Naive thymus-derived CD4-positive, alpha-beta T cell (primary cell): ENCODE measurements at regions of chr15 and their contacts with region 1.

Region 1: GRCh38 chr15:90387537-90388461 is at the start of gene IQGAP1:
- DNase-seq: peak; percentile 91 to 96 (median 94)
- ATAC-seq: peak; percentile 97
- H3K4me3 ChIP-seq: peak within 1 kb of the TSS; percentile 88
- H3K4me3 Mint-ChIP-seq: peak within 1 kb of the TSS; percentile 80 to 95 (median 92)
- H3K27ac ChIP-seq: peak within 1 kb of the TSS; percentile 93
- H3K27ac Mint-ChIP-seq: peak within 1 kb of the TSS; percentile 68 to 99 (median 94)
- H3K4me1 ChIP-seq: peaks cover 29 to 33% of the 10 kb centered on the region in 2 donors
- H3K4me1 Mint-ChIP-seq: peaks cover 38 to 56% (median 50%) of the 10 kb centered on the region in 7 donors
- H3K27me3 ChIP-seq: no peaks in the 10 kb centered on the region
- H3K27me3 Mint-ChIP-seq: no peaks in the 10 kb centered on the region
- total RNA-seq, gene IQGAP1: 81.8 to 263 (median 93.8) TPM

Region 2: DNA sequence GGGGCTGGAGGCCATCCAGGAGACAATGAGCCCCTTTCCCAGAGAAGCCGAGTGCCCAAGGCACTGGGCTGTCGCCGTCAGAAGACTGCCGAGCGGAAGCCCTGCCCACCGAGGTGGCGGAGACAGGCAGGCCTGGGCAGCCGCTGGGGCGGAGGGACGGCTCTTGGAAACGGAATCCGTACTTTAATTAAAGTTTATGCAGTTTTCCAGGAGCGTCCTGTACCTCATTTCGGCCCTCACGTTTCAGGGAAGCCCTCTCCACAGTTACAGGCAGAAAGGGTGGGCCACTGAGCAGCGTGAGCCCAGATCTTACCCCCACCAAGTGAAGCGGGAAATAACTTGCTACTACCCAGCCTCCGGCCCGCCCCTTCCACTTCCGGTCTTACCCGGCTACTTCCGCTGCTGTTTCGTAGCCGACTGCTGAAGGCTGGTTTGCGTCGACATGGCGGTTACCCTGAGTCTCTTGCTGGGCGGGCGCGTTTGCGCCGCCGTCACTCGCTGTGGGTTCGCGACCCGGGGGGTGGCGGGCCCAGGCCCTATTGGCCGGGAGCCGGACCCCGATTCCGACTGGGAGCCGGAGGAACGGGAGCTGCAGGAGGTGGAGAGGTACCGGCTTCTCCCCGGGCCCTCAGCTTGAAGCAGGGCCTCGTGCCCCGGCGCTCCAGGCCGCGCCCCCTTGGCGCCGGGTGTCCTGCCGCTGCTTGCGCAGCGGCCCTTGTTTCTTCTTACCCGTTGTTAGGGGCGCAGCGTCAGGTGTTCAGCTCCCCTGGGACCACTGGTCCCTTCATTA is 122.3 kb before region 1 on chr15 and contains the start of gene NGRN:
- CTCF ChIA-PET with region 1: no interaction called
- POLR2A ChIA-PET with region 1: no interaction called
- intact Hi-C with region 1: loop called in 1 of 2 experiments (anchors 1 kb)
- DNase-seq: peak; percentile 81 to 96 (median 93)
- ATAC-seq: peak; percentile 94
- H3K4me3 ChIP-seq: peak within 1 kb of the TSS; percentile 84
- H3K4me3 Mint-ChIP-seq: peak within 1 kb of the TSS; percentile 95 to 99 (median 97)
- H3K27ac ChIP-seq: peak within 1 kb of the TSS; percentile 96
- H3K27ac Mint-ChIP-seq: peak within 1 kb of the TSS; percentile 98 to 100 (median 99)
- H3K4me1 ChIP-seq: peaks cover 36 to 40% of the 10 kb centered on the region in 2 donors
- H3K4me1 Mint-ChIP-seq: peaks cover 22 to 60% (median 48%) of the 10 kb centered on the region in 7 donors
- H3K27me3 ChIP-seq: no peaks in the 10 kb centered on the region
- H3K27me3 Mint-ChIP-seq: no peaks in the 10 kb centered on the region
- total RNA-seq, gene NGRN: 34.1 to 51.5 (median 48.4) TPM

Region 3: DNA sequence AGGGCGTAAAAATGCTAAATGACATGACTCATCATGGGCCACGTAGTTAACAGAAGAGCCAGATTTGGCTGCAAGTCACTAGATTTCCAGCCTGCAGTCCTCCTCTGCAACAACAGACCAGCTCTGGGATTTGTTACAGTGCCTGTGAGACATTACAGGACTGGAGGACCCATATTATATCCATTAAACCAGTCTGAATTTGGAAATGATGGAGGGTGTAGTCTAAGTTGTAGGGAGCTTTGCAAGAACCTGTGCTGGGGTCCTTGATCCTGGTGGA is 24.9 kb before region 1 on chr15:
- CTCF ChIA-PET with region 1: interaction called, 7 read pairs
- POLR2A ChIA-PET with region 1: interaction called, 4 read pairs
- intact Hi-C with region 1: loop called in 1 of 2 experiments (anchors 1 kb)
- DNase-seq: no peak
- ATAC-seq: no peak
- H3K4me3 ChIP-seq: no peak overlapping the region
- H3K4me3 Mint-ChIP-seq: peak overlapping the region in 1 of 10 donors; percentile 44
- H3K27ac ChIP-seq: no peak overlapping the region
- H3K27ac Mint-ChIP-seq: no peak overlapping the region
- H3K4me1 ChIP-seq: peaks cover 6 to 13% of the 10 kb centered on the region in 2 donors
- H3K4me1 Mint-ChIP-seq: peaks cover 11 to 35% (median 34%) of the 10 kb centered on the region in 7 donors
- H3K27me3 ChIP-seq: no peaks in the 10 kb centered on the region
- H3K27me3 Mint-ChIP-seq: no peaks in the 10 kb centered on the region

Region 4: DNA sequence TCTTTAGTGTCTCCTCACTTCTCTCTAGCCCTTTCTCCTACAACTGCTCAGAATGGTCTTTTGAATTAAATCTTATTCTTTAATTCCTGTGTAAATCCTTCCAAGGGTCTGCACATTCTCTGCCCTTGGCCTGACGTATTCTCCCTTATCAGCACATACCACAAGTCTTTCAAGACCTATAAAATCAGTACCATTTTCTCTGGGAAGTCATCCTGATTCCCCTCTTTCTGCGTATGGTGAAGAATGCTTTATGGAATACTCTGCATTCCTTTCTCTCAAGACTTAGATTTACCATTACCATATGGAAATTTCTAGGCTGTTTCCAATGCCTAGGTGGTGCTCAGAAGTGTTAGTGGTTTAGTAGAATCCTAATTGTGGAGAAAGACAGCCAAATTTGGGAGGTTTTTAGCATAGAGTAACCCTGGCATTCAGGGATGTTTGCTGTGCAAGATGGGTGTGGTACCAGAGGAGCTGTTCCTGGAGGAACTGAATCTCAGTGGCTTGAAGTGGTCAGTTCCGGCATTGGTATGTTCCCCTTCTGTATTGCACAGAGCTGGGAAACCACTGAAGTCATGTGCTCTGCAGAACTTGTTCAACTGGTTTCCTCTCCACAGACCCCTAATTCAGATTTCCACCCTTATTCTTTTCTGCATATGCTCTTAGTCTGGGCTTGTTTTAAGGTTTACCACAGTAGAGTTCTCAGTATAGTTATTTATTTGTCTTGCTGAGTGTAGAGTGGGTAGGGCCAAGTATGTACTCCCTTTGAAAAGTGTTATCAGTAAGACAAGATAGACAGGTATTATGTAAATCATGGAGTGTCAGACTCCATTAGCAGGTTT is 24.8 kb after region 1 on chr15:
- CTCF ChIA-PET with region 1: interaction called, 3 read pairs
- POLR2A ChIA-PET with region 1: interaction called, 5 read pairs
- intact Hi-C with region 1: loop called in 1 of 2 experiments (anchors 2 kb)
- DNase-seq: no peak
- ATAC-seq: peak; percentile 78
- H3K4me3 ChIP-seq: no peak overlapping the region
- H3K4me3 Mint-ChIP-seq: peak overlapping the region; percentile 2 to 69 (median 57)
- H3K27ac ChIP-seq: no peak overlapping the region
- H3K27ac Mint-ChIP-seq: peak overlapping the region; percentile 1 to 79 (median 39)
- H3K4me1 ChIP-seq: peaks cover 30 to 31% of the 10 kb centered on the region in 2 donors
- H3K4me1 Mint-ChIP-seq: peaks cover 64 to 87% (median 80%) of the 10 kb centered on the region in 7 donors
- H3K27me3 ChIP-seq: no peaks in the 10 kb centered on the region
- H3K27me3 Mint-ChIP-seq: no peaks in the 10 kb centered on the region

Region 5: DNA sequence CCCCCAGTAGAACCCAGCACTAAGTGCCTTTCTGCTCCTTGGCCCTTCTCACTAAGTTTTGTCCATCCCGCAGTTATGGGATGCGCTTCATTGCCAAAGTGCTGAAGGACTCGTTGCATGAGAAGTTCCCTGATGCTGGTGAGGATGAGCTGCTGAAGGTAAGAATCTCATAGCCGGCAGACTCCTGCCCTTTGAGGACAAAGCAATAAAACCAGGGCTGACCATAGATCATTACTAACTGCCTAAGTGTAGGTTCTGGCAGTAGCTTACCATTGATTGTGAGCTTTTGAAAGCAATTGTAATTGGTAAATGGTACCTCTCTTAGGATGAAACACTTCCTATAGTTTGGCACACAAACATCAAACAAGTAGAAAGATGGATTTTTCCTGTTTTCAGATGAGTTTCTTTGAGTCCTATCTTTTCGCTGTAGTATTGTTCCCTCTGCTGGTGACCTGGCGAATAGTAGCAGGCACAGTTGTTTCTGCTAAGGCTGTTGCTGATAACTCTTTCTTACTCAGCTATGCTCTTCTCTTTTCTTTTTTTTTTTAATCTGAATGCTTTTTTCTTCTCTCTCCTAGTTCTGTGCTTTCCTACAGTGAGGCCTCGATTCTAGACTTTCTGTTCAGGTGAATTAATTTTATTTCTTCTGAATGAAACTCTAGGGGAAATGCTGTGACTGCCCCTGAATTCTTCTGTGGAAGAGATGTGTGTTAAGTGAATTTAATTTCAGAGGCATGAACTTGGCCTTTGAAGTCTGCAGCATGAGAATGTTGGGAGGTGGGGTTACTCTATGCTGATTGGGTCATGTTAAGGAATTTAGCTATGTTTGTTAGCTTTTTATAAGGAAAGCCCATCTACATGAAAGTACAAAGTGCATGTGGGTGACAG is 94.6 kb after region 1 on chr15:
- CTCF ChIA-PET with region 1: no interaction called
- POLR2A ChIA-PET with region 1: no interaction called
- intact Hi-C with region 1: loop called (anchors 1 to 5 kb)
- DNase-seq: peak in 7 of 9 donors; percentile 28 to 60 (median 47)
- ATAC-seq: peak; percentile 61
- H3K4me3 ChIP-seq: no peak overlapping the region
- H3K4me3 Mint-ChIP-seq: no peak overlapping the region
- H3K27ac ChIP-seq: no peak overlapping the region
- H3K27ac Mint-ChIP-seq: peak overlapping the region in 4 of 9 donors; percentile 9 to 50 (median 32)
- H3K4me1 ChIP-seq: peaks cover 10 to 11% of the 10 kb centered on the region in 2 donors
- H3K4me1 Mint-ChIP-seq: peaks cover 9 to 44% (median 40%) of the 10 kb centered on the region in 7 donors
- H3K27me3 ChIP-seq: no peaks in the 10 kb centered on the region
- H3K27me3 Mint-ChIP-seq: no peaks in the 10 kb centered on the region

Region 6: GRCh38 chr15:90914305-90915080 is 526.7 kb after region 1 on chr15:
- CTCF ChIA-PET with region 1: no interaction called
- POLR2A ChIA-PET with region 1: no interaction called
- intact Hi-C with region 1: no loop called
- DNase-seq: no peak
- ATAC-seq: peak; percentile 34
- H3K4me3 ChIP-seq: no peak overlapping the region
- H3K4me3 Mint-ChIP-seq: no peak overlapping the region
- H3K27ac ChIP-seq: no peak overlapping the region
- H3K27ac Mint-ChIP-seq: peak overlapping the region in 1 of 9 donors; percentile 9
- H3K4me1 ChIP-seq: no peaks in the 10 kb centered on the region
- H3K4me1 Mint-ChIP-seq: peaks cover 0 to 12% (median 0%) of the 10 kb centered on the region in 7 donors
- H3K27me3 ChIP-seq: no peaks in the 10 kb centered on the region
- H3K27me3 Mint-ChIP-seq: no peaks in the 10 kb centered on the region